ENCODE measurements at regions of chr11 and their contacts with region 1.

Region 1: GRCh38 chr11:93234602-93235207 is 36.9 kb upstream of the SLC36A4 start:
- DNase-seq: peak; percentile 83
- ATAC-seq: peak; percentile 95

Region 2: DNA sequence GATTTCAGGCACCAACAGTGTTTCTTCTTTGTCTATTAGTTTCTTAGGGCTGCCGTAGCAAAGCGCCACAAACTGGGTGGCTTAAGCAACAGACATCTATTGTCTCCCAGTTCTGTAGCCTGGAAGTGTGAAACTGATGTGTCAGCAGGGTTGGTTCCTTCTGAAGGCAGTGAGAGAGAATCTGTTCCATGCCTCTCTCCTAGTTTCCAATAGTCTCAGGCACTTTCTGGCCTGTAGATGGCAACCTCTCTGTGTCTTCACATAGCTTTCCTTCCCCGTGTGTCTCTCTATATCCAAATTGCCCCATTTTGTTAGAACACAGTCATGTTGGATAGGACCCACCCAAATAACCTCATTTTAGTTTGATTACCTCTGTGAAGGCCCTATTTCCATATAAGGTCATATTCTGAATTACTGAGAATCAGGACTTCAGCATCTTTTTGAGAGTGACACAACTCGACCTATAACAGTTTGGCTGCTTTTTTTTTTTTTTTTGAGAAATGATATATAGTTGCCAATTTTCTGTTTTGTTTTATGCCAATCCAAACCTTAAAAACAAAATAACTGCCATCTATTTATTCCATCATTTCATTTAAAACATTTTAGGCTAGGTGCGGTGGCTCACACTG is 145.1 kb before region 1 on chr11:
- intact Hi-C with region 1: no loop called
- DNase-seq: no peak
- ATAC-seq: peak; percentile 71

Region 3: GRCh38 chr11:93543292-93543977 is 308.7 kb after region 1 on chr11 and contains the start of gene SMCO4:
- intact Hi-C with region 1: loop called (anchors 10 kb)
- DNase-seq: peak; percentile 91
- ATAC-seq: peak; percentile 94
- total RNA-seq, gene SMCO4: 12.3 TPM

Region 4: GRCh38 chr11:93652161-93652597 is 417.5 kb after region 1 on chr11:
- intact Hi-C with region 1: loop called (anchors 10 kb)
- DNase-seq: no peak
- ATAC-seq: no peak

Region 5: GRCh38 chr11:94664346-94664745 is 1429.6 kb after region 1 on chr11:
- intact Hi-C with region 1: no loop called
- DNase-seq: no peak
- ATAC-seq: no peak